ENCODE measurements at regions of chr2 and their contacts with region 1.

Region 1: DNA sequence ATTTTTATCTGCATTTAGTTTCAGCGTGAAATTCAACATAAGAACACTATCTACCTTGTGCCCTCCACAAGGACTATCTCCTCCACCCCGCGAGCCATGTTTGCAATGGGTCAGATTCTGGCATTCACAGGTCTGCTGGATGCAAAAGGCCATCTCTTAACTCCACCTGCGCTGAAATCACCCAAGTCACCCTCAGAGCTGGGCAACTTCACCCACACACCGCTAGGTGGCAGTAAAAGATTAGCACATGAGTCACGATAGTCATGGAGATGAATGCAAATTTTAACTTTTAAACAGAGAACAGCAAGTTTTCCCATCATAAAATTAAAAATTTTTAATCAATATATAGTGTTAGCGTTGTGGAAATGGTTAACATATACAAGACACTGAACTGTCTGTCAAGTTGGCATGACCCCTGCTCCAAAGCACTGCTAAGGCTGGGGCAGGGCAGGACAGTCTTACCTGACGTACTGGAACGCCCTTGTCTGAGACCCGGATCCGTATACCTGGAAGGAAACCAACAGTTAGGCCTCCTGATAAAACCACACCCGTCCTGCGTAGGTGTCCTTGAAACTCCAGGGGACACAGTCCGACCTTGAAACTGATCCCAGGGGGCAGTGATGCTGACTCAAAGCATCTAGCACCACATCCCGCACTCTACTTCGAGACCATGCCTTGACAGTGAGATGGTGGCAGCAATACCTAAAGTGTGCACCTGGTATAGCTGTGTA is 89.6 kb downstream of the UXS1 start:
- DNase-seq: peak in 1 of 2 donors; percentile 54
- ATAC-seq: peak; percentile 86

Region 2: GRCh38 chr2:106020821-106021661 is 83.5 kb before region 1 on chr2:
- intact Hi-C with region 1: no loop called
- DNase-seq: no peak
- ATAC-seq: no peak

Region 3: DNA sequence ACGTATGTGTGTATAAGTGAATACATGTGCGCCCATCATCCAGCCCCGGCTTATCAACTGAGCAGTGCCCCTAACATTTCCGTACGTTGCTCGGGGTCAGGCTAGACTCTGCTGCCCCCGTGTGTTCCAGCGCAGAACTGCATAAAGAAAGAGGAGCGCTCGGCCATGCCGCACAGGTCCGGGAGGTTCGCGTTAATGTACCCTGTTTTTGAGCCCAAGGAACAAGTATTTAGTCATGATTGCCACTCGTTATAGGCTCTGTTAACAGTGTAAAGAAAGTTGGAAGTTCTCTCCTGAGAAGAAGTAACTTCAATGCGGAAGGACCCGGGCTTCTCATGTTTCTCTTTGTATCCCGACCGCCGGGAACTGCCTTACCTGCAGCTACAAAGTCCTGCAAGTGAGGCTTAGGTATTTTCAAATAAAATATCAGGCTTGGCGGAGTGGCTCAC is 438.3 kb after region 1 on chr2:
- intact Hi-C with region 1: loop called in 1 of 2 experiments (anchors 10 kb)
- DNase-seq: peak; percentile 41 to 81
- ATAC-seq: peak; percentile 86

Region 4: GRCh38 chr2:106582148-106583143 is 477.9 kb after region 1 on chr2:
- intact Hi-C with region 1: loop called in 1 of 2 experiments (anchors 10 kb)
- DNase-seq: peak; percentile 63 to 66
- ATAC-seq: peak; percentile 94

Measured in left colon (tissue), 2 donors.